Activated naive CD4-positive, alpha-beta T cell treated with anti-CD3 and anti-CD28 coated beads for 36 hours (primary cell): ENCODE measurements at regions of chr1 and their contacts with region 1.

Region 1: GRCh38 chr1:76154206-76154956 is 79.8 kb downstream of the ST6GALNAC3 start:
- DNase-seq: peak; percentile 90
- H3K4me3 Mint-ChIP-seq: peak overlapping the region; percentile 72
- H3K27ac Mint-ChIP-seq: peak overlapping the region; percentile 67
- H3K4me1 Mint-ChIP-seq: peaks cover 12% of the 10 kb centered on the region
- H3K27me3 Mint-ChIP-seq: no peaks in the 10 kb centered on the region

Region 2: GRCh38 chr1:76254104-76255030 is 100.0 kb after region 1 on chr1:
- CTCF ChIA-PET with region 1: interaction called, 4 read pairs
- intact Hi-C with region 1: loop called (anchors 1 kb)
- DNase-seq: peak; percentile 56
- H3K4me3 Mint-ChIP-seq: no peak overlapping the region
- H3K27ac Mint-ChIP-seq: peak overlapping the region; percentile 65
- H3K4me1 Mint-ChIP-seq: peaks cover 68% of the 10 kb centered on the region
- H3K27me3 Mint-ChIP-seq: no peaks in the 10 kb centered on the region

Region 3: GRCh38 chr1:76330991-76331603 is 176.7 kb after region 1 on chr1:
- CTCF ChIA-PET with region 1: interaction called, 11 read pairs
- intact Hi-C with region 1: loop called (anchors 1 kb)
- DNase-seq: peak; percentile 68
- H3K4me3 Mint-ChIP-seq: no peak overlapping the region
- H3K27ac Mint-ChIP-seq: no peak overlapping the region
- H3K4me1 Mint-ChIP-seq: peaks cover 14% of the 10 kb centered on the region
- H3K27me3 Mint-ChIP-seq: no peaks in the 10 kb centered on the region

Region 4: GRCh38 chr1:76713535-76713934 is 559.2 kb after region 1 on chr1:
- CTCF ChIA-PET with region 1: interaction called, 4 read pairs
- intact Hi-C with region 1: loop called (anchors 10 kb)
- DNase-seq: peak; percentile 9
- H3K4me3 Mint-ChIP-seq: no peak overlapping the region
- H3K27ac Mint-ChIP-seq: no peak overlapping the region
- H3K4me1 Mint-ChIP-seq: peaks cover 7% of the 10 kb centered on the region
- H3K27me3 Mint-ChIP-seq: peaks cover 9% of the 10 kb centered on the region

Region 5: GRCh38 chr1:77126307-77126706 is 971.9 kb after region 1 on chr1:
- CTCF ChIA-PET with region 1: interaction called, 3 read pairs
- intact Hi-C with region 1: loop called (anchors 1 kb)
- DNase-seq: peak; percentile 36
- H3K4me3 Mint-ChIP-seq: no peak overlapping the region
- H3K27ac Mint-ChIP-seq: no peak overlapping the region
- H3K4me1 Mint-ChIP-seq: no peaks in the 10 kb centered on the region
- H3K27me3 Mint-ChIP-seq: no peaks in the 10 kb centered on the region

Region 6: GRCh38 chr1:77900687-77901293 is 1746.4 kb after region 1 on chr1:
- CTCF ChIA-PET with region 1: no interaction called
- intact Hi-C with region 1: loop called (anchors 5 kb)
- DNase-seq: peak; percentile 40
- H3K4me3 Mint-ChIP-seq: no peak overlapping the region
- H3K27ac Mint-ChIP-seq: no peak overlapping the region
- H3K4me1 Mint-ChIP-seq: no peaks in the 10 kb centered on the region
- H3K27me3 Mint-ChIP-seq: peaks cover 2% of the 10 kb centered on the region